Posterior cingulate gyrus (tissue), 11 donors: ENCODE measurements at regions of chr18 and their contacts with region 1.

Region 1: DNA sequence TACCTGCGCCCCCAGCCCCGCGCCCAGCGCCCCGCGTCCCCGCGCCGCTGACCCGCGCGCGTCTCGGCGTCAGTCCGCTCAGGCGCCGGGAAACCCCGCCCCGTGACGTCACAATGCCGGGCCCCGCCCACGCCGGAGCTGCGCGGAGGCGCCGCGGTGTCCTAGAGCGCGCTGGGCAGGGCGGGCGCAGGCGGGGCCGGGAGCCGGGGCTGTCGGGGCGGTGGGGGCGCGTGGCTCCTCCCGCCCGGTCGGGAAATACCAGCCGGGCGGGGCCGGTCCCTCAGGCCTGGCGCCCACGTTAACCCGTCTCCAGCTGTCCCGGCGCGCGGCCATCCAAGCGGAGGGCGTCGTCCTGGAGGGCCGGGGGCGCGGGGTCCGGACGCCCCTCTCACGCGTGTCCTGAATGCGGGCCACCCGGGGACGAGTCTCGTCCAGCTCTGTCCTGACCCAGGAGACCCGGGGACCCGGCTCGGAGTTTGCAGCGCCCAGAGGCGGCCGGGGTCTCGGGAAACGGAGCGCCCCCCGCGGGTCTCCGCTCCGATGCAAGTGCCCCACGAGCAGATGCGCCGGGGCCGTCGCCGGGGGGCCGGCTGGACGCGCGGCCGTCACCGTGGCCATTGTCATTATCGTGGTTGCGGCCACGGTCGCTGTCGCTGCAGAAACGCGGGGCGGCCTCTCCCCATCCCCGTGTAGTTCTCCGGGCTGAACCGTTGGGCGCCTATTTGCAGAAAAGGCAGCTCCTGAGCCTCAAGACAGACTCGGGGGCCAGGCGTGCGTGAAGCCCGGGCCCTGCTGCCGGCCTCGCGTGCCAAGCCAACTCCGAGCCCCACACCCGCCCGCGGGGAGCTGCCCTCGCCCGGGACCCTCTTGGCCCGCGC is at the start of gene SLC66A2:
- DNase-seq: peak; percentile 85 to 98 (median 94)

Region 2: DNA sequence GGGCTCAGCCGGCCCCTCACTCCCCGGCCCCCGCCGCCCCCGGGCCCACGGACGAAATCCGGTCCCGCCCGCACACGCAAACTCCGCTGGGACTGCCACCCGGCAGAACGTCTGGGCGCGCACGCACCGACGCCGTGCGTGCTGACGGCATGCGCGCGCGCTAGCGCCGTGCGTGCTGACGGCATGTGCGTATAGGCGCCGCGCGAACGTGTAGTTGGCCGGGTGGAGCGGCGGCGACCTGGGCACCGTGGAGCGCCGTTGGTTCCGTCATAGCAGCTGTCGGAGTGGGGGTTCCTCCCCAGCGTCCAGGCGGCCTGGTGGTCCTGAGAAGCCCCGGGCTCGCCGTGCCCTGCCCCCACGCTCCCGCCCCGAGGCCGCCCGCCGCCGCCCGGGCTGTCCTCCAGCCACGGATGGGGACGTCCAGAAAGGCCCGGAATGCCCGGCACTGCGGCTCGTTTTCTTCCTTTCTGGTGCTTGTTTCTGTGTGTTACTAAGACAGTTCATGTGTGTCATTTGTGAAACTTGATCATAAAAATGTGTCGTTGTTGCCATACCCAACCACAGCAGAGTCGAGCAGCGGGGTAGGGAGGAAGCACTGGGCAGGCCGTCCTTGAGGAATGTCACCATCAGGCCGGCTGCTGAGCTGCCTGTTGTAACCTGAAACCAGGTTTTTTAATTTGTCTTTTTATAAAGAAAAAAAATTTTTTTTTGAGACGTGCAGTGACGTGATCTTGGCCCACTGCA is 36.8 kb after region 1 on chr18 and contains the start of gene TXNL4A:
- intact Hi-C with region 1: loop called (anchors 5 kb)
- DNase-seq: peak; percentile 73 to 98 (median 85)